IMR-90 (cell line): ENCODE measurements at regions of chr3 and their contacts with region 1.

Region 1: DNA sequence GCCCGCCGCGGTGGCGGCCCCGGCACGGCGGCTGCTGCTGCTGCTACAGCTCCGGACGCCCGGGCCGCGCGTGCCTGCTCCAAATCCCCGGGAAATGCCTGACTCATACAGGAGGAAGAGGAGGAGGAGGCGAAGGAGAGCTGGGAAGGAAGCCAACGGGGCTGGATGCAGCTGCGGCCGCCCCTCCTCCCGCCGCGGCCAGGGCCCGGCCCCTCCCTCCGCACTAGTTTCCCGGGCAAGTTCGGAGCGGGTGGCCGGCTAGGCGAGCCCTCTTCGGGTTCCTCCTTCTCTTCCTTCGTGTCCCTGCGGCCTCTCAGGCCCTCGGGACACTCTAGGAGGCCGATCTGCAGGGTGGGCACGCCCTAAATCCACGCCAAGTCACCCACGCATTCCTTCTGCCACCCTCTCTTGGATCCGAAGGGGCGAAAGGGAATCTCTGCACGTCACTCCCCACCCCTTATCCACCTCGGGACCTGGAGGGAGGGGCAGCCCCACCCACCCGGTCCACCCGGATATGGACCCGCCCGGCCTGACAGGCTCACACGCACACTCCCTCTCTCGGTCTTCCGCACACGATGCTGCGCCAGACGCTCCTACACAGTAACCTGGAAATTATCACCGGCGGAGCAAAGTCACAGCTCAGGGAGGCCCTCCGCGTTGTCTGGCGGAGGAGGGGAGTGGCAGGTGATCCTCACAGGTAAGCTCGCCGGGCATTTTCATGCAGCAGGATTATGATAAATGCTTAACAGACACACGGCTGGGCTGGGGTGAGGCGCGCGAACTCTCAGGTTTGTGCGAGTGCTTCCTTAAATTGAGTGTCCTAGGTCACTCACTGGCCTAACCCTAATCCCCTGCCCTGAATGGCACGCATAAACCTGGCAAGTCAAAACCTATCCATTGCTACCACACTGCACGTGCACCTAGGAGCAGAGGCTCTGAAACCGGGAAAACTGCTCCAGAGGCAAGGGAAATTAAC is at the starts of genes OSBPL10 and ZNF860:
- DNase-seq: peak; percentile 92
- ATAC-seq: peak; percentile 87
- H3K4me3 ChIP-seq: peak within 1 kb of the TSS; percentile 87
- H3K27ac ChIP-seq: peak within 1 kb of the TSS; percentile 63
- H3K4me1 ChIP-seq: no peaks in the 10 kb centered on the region; the same call in 1 of the 2 replicates
- H3K27me3 ChIP-seq: no peaks in the 10 kb centered on the region
- CTCF ChIP-seq: no peak
- POLR2A ChIP-seq: peak; percentile 59
- RAD21 ChIP-seq: no peak
- total RNA-seq, gene OSBPL10: 7.2 and 9.5 TPM in 2 replicates
- total RNA-seq, gene ZNF860: 0.18 and 0.56 TPM in 2 replicates

Region 2: DNA sequence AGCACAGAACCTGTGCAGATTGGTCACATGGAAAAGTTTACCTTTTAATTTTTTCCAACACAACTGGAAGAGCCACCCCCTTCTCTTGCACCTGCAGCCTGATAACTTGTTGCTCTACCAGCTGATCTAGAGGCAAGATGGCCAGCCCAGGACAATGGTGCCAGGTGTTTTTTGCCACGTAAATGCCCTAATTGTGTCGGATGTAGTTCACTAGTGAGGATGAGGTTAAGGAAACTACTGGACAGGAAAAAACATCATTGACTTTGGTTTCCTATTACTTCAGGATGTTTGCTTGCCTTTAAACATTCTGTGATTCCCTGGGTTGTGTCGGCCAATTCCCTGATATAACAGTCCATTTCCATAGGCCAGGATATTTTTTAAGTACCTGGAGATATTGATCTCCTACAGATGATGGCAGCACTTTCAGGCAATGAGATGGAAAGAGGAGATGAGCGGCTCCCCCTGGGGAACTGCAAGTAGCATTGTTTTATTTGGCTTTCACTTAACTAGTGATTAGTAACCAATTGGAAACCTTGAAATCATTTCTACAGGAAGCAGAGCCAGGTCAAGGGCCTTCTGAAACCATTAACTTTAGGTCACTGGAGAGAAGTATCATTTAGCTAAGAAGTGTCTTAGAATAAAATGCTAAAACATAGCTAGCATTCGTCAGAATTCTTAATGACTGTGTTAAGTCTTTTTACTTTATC is 73.0 kb before region 1 on chr3:
- CTCF ChIA-PET with region 1: no interaction called
- POLR2A ChIA-PET with region 1: no interaction called
- dilution Hi-C with region 1: no loop called
- in situ Hi-C with region 1: no loop called
- intact Hi-C with region 1: no loop called
- DNase-seq: peak; percentile 14
- ATAC-seq: no peak
- H3K4me3 ChIP-seq: no peak overlapping the region
- H3K27ac ChIP-seq: no peak overlapping the region
- H3K4me1 ChIP-seq: no peaks in the 10 kb centered on the region
- H3K27me3 ChIP-seq: no peaks in the 10 kb centered on the region
- CTCF ChIP-seq: no peak
- POLR2A ChIP-seq: no peak
- RAD21 ChIP-seq: no peak

Region 3: GRCh38 chr3:31968927-31969418 is 12.5 kb before region 1 on chr3:
- CTCF ChIA-PET with region 1: no interaction called
- POLR2A ChIA-PET with region 1: no interaction called
- dilution Hi-C with region 1: no loop called
- in situ Hi-C with region 1: no loop called
- intact Hi-C with region 1: loop called (anchors 1 kb)
- DNase-seq: peak; percentile 93
- ATAC-seq: peak; percentile 91
- H3K4me3 ChIP-seq: no peak overlapping the region
- H3K27ac ChIP-seq: peak overlapping the region; percentile 89
- H3K4me1 ChIP-seq: peaks cover 10% of the 10 kb centered on the region
- H3K27me3 ChIP-seq: no peaks in the 10 kb centered on the region
- CTCF ChIP-seq: no peak
- POLR2A ChIP-seq: no peak
- RAD21 ChIP-seq: no peak

Region 4: GRCh38 chr3:32154205-32154579 is 172.7 kb after region 1 on chr3:
- CTCF ChIA-PET with region 1: no interaction called
- POLR2A ChIA-PET with region 1: no interaction called
- dilution Hi-C with region 1: no loop called
- in situ Hi-C with region 1: no loop called
- intact Hi-C with region 1: no loop called
- DNase-seq: no peak
- ATAC-seq: peak; percentile 68
- H3K4me3 ChIP-seq: no peak overlapping the region
- H3K27ac ChIP-seq: no peak overlapping the region
- H3K4me1 ChIP-seq: no peaks in the 10 kb centered on the region
- H3K27me3 ChIP-seq: no peaks in the 10 kb centered on the region
- CTCF ChIP-seq: no peak
- POLR2A ChIP-seq: no peak
- RAD21 ChIP-seq: no peak